ENCODE measurements at regions of chr20 and their contacts with region 1.

Region 1: DNA sequence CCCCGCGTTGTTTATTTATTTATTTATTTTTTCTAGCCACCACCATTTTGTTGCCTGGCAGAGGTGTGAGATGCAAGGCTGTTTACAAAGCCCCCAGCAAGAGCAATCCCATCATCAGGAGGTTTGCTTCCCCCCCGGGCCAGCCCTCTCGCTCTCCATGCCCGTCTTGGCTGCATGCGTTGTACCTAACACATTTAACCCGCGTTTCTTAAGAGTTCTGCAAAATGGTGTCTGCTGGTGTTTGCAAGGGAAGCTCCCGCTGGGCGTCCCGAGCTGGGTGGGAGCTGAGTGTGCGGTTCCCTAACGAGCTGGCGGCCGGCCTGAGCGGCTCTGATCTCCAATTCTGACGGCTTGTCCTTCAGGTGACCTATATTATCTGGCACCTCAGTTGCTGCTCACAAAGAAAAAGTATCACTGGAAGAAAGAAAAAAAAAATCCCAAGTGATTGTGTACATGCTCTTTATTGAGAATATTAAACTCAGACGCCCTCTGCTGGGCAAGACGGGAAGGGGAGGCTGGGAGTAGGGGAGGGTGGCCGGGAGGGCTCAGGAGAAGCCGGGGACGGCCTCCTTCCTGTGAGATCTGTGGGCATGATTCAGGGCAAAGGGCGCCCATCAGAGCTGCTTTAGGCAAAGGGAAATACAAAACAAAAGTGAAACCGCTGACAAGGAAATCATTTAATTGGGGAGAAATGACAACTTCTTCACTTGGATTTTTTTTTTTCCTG is 154.8 kb downstream of the BCAS1 start:
- DNase-seq: peak; percentile 97
- H3K4me3 Mint-ChIP-seq: peak overlapping the region; percentile 86
- H3K27ac Mint-ChIP-seq: peak overlapping the region; percentile 79
- H3K4me1 Mint-ChIP-seq: peaks cover 39% of the 10 kb centered on the region
- H3K27me3 Mint-ChIP-seq: peaks cover 2% of the 10 kb centered on the region

Region 2: GRCh38 chr20:53370345-53370961 is 545.2 kb before region 1 on chr20:
- CTCF ChIA-PET with region 1: no interaction called
- POLR2A ChIA-PET with region 1: no interaction called
- DNase-seq: no peak
- H3K4me3 Mint-ChIP-seq: no peak overlapping the region
- H3K27ac Mint-ChIP-seq: no peak overlapping the region
- H3K4me1 Mint-ChIP-seq: no peaks in the 10 kb centered on the region
- H3K27me3 Mint-ChIP-seq: no peaks in the 10 kb centered on the region

Region 3: GRCh38 chr20:53578492-53579222 is 337.0 kb before region 1 on chr20:
- CTCF ChIA-PET with region 1: interaction called, 28 read pairs
- POLR2A ChIA-PET with region 1: interaction called, 43 read pairs
- DNase-seq: peak; percentile 55
- H3K4me3 Mint-ChIP-seq: peak overlapping the region; percentile 78
- H3K27ac Mint-ChIP-seq: peak overlapping the region; percentile 80
- H3K4me1 Mint-ChIP-seq: peaks cover 92% of the 10 kb centered on the region
- H3K27me3 Mint-ChIP-seq: no peaks in the 10 kb centered on the region

Region 4: DNA sequence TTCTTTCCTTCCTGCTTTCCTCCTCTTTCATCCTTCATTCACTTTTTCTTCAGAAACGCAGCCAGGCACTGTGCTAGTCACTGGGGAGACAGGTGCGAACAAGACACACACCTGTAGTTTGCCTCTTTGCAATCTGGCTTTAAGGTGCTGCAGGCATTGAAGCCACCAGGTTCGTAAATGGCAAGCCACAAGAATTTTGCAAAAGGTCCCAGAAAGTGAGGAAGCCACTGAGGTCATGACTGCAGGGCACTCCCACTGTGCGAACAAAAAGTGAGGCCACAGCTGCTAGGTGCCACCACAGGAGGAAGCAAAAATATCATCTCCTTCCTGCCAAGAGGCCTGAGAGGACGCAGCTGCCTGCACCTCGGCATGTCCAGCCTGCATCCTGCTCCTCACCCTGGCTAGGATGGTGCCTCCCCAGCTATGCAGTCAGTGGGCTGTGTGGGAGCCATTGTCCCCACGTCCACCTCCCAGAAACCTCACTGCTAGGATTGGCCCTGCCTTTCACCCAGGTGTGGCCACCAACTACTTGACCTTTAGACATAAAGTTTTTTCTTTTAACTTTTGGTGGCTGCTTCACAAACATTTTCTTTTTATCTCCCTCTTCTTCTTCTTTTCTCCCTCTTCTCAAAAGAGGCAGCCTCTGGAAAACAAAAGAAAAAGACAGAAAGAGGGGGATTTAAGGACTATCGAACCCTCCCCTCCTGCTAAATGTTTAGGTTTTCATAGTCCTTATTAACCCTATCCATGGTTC is 76.0 kb before region 1 on chr20:
- CTCF ChIA-PET with region 1: interaction called, 12 read pairs
- POLR2A ChIA-PET with region 1: interaction called, 3 read pairs
- DNase-seq: peak; percentile 82
- H3K4me3 Mint-ChIP-seq: peak overlapping the region; percentile 72
- H3K27ac Mint-ChIP-seq: peak overlapping the region; percentile 89
- H3K4me1 Mint-ChIP-seq: peaks cover 74% of the 10 kb centered on the region
- H3K27me3 Mint-ChIP-seq: no peaks in the 10 kb centered on the region

Region 5: GRCh38 chr20:53891306-53891944 is 24.2 kb before region 1 on chr20:
- CTCF ChIA-PET with region 1: interaction called, 14 read pairs
- POLR2A ChIA-PET with region 1: no interaction called
- DNase-seq: no peak
- H3K4me3 Mint-ChIP-seq: no peak overlapping the region
- H3K27ac Mint-ChIP-seq: no peak overlapping the region
- H3K4me1 Mint-ChIP-seq: peaks cover 36% of the 10 kb centered on the region
- H3K27me3 Mint-ChIP-seq: no peaks in the 10 kb centered on the region

Region 6: DNA sequence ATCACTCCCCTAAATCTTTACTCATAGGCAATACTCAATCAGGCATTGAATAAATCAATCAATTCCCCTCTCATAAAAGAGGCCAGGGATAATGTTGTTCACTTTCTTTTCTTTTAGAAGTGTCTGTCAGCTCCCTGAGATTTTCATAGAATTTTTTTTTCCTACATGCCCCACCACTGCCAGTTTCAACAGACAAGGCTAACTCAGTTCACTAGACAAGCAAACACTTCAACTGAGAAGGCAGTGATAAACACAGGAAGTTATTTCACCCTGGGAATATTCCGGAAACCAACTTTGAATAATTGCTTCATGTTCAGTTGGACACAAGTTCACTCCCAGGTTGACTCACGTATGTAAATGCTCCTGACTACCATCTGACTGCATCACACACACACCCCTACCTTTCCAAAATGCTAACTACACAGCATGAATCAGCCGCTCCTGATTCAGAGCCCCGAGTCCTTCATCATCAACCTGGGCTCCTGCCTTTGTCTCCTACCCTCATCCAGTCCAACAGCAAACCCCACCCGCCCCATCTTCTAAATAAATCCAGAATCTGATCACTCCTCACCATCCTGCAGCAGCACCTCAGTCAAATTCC is 10.9 kb after region 1 on chr20:
- CTCF ChIA-PET with region 1: interaction called, 10 read pairs
- POLR2A ChIA-PET with region 1: interaction called, 3 read pairs
- DNase-seq: no peak
- H3K4me3 Mint-ChIP-seq: no peak overlapping the region
- H3K27ac Mint-ChIP-seq: no peak overlapping the region
- H3K4me1 Mint-ChIP-seq: peaks cover 34% of the 10 kb centered on the region
- H3K27me3 Mint-ChIP-seq: peaks cover 2% of the 10 kb centered on the region

Region 7: GRCh38 chr20:54193817-54194216 is 278.2 kb after region 1 on chr20:
- CTCF ChIA-PET with region 1: no interaction called
- POLR2A ChIA-PET with region 1: no interaction called
- DNase-seq: no peak
- H3K4me3 Mint-ChIP-seq: no peak overlapping the region
- H3K27ac Mint-ChIP-seq: no peak overlapping the region
- H3K4me1 Mint-ChIP-seq: no peaks in the 10 kb centered on the region
- H3K27me3 Mint-ChIP-seq: peaks cover 11% of the 10 kb centered on the region

Region 8: GRCh38 chr20:54257071-54257840 is 341.6 kb after region 1 on chr20:
- CTCF ChIA-PET with region 1: no interaction called
- POLR2A ChIA-PET with region 1: no interaction called
- DNase-seq: no peak
- H3K4me3 Mint-ChIP-seq: no peak overlapping the region
- H3K27ac Mint-ChIP-seq: no peak overlapping the region
- H3K4me1 Mint-ChIP-seq: no peaks in the 10 kb centered on the region
- H3K27me3 Mint-ChIP-seq: peaks cover 2% of the 10 kb centered on the region

Measured in activated CD4-positive, alpha-beta memory T cell treated with anti-CD3 and anti-CD28 coated beads, Interleukin-2, amount 10 ng/mL, durations not matched to agents 7 days and 5 days (primary cell).